Calu3 (cell line): ENCODE measurements at regions of chr2 and their contacts with region 1.

Region 1: GRCh38 chr2:136117909-136118818 is at the start of gene CXCR4:
- DNase-seq: peak; percentile 83
- H3K4me3 Mint-ChIP-seq: peak within 1 kb of the TSS; percentile 88
- H3K27ac Mint-ChIP-seq: peak within 1 kb of the TSS; percentile 27
- H3K4me1 Mint-ChIP-seq: peaks cover 20% of the 10 kb centered on the region
- H3K27me3 Mint-ChIP-seq: no peaks in the 10 kb centered on the region
- CTCF ChIP-seq: peak; percentile 20
- total RNA-seq, gene CXCR4: 12.4 and 16.7 TPM in 2 replicates

Region 2: DNA sequence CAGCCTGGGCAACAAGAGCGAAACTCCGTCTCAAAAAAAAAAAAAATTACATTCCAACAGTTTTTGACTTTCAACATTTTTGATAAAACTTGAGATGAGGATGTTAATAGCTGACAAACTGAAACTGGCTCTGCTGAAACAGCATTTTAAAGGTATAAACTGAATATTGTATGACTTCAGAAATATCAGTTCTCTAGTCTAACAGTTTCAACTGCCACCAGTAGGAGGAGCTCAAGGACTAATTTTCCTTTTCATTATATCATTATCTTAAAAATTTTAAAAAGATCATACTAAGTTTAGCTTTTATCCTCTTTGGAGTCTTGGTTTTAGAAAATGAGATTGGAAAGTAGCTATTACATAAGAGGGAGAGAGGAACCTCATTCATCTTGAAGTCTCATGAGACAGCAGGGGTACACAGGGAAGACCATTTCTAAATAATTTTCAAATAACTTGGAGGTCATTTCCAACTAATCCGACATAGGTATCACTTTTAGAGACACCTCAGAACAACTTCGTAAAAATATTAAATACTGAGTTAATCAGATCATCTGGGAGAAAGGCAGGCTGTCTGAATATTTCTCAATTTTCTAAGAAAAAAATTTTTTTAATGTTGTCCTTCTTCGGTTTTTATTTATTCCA is 204.3 kb before region 1 on chr2:
- CTCF ChIA-PET with region 1: interaction called, 3 read pairs
- intact Hi-C with region 1: loop called (anchors 5 kb)
- DNase-seq: peak; percentile 34
- H3K4me3 Mint-ChIP-seq: no peak overlapping the region
- H3K27ac Mint-ChIP-seq: no peak overlapping the region
- H3K4me1 Mint-ChIP-seq: no peaks in the 10 kb centered on the region
- H3K27me3 Mint-ChIP-seq: no peaks in the 10 kb centered on the region
- CTCF ChIP-seq: peak; percentile 74

Region 3: GRCh38 chr2:135985018-135985825 is 132.9 kb before region 1 on chr2 and contains the start of gene DARS1:
- CTCF ChIA-PET with region 1: no interaction called
- intact Hi-C with region 1: loop called (anchors 1 kb)
- DNase-seq: peak; percentile 93
- H3K4me3 Mint-ChIP-seq: peak within 1 kb of the TSS; percentile 85
- H3K27ac Mint-ChIP-seq: peak within 1 kb of the TSS; percentile 94
- H3K4me1 Mint-ChIP-seq: no peaks in the 10 kb centered on the region
- H3K27me3 Mint-ChIP-seq: no peaks in the 10 kb centered on the region
- CTCF ChIP-seq: no peak
- total RNA-seq, gene DARS1: 57.5 and 63.3 TPM in 2 replicates

Region 4: GRCh38 chr2:136025057-136025973 is 92.8 kb before region 1 on chr2:
- CTCF ChIA-PET with region 1: no interaction called
- intact Hi-C with region 1: loop called (anchors 10 kb)
- DNase-seq: peak; percentile 77
- H3K4me3 Mint-ChIP-seq: peak overlapping the region; percentile 49
- H3K27ac Mint-ChIP-seq: no peak overlapping the region
- H3K4me1 Mint-ChIP-seq: peaks cover 29% of the 10 kb centered on the region
- H3K27me3 Mint-ChIP-seq: no peaks in the 10 kb centered on the region
- CTCF ChIP-seq: no peak

Region 5: DNA sequence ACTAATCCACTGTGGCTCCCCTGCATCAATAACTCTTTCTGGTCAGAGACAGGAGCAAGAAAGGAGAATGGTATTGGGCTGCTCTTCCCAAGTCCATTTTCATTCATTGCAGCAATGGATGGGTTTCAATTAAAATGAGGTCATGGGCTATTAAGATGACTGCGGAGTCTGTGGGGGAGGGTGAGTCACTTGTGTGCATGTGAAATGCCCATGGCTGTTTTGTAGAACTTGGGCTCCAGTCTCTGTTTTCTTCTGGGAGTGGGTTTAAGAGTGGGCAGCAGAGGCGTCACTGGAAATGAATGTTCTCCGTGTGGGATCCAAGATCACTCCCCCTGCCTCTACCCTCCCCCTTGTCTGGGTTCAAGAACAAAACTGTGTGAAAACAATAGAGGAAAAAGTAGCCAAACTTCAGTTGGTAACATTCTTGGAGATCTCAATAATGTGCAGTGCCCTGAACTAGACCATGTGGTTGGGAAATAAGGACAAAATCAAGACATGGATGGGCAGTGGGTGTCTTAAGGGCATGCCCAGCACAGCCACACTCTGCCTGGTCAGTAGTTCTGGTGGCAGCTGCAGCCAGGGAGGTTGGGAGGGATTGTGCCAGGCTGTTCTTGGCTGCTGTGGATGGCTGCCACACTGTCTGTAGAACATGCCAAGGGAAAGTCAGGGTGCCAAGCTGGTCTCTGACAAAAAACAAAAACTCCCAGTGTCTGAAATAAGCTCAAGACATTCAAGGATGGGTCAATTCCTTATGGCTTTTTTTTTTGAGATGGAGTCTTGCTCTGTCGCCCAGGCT is 68.0 kb after region 1 on chr2:
- CTCF ChIA-PET with region 1: no interaction called
- intact Hi-C with region 1: no loop called
- DNase-seq: no peak
- H3K4me3 Mint-ChIP-seq: no peak overlapping the region
- H3K27ac Mint-ChIP-seq: no peak overlapping the region
- H3K4me1 Mint-ChIP-seq: peaks cover 7% of the 10 kb centered on the region
- H3K27me3 Mint-ChIP-seq: no peaks in the 10 kb centered on the region
- CTCF ChIP-seq: no peak

Region 6: DNA sequence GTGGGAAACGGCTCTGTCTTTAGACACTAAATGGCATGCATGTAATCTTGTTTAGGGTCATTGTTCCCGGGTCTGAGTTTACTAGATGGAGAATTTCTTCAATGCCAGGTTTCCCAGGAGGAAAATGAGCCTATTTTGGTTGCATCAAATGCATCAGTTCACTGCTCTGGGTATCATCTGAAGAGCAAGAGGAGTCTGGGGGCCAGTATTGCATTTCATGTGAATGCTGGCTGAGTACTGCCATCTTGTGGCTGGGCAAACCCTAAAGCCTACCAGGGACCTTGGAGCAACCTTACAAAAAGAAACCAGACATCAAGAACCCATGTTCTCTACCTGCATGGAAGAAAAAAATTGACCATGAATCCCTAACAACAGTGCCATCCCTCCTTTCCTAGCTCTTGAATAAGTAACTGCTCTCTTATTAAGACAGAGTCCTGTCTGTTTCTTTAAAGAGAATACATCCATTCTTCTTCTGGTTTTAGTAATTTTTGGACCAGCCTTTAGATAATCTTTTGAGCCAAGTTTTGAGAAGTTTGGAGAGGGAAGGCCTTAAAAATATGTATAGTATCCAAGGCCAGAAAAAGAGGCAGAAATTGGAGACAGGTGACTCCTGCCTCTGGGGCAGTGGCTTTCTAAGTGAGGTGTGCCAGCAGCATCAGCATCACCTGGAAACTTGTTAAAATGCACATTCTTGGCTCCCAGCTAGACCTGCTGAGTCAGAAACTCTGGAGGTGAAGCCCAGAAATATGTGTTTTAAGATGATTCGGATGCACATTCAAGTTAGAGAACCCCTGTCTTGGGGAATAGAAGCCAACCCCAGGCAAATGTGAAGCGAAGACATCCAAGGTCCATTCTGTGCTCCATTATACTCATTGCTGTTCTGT is 260.8 kb after region 1 on chr2:
- CTCF ChIA-PET with region 1: no interaction called
- intact Hi-C with region 1: loop called (anchors 1 kb)
- DNase-seq: peak; percentile 66
- H3K4me3 Mint-ChIP-seq: no peak overlapping the region
- H3K27ac Mint-ChIP-seq: no peak overlapping the region
- H3K4me1 Mint-ChIP-seq: no peaks in the 10 kb centered on the region
- H3K27me3 Mint-ChIP-seq: no peaks in the 10 kb centered on the region
- CTCF ChIP-seq: peak; percentile 70